Endothelial cell of umbilical vein (primary cell): ENCODE measurements at regions of chr13 and their contacts with region 1.

Region 1: GRCh38 chr13:106083620-106084350 is 451.7 kb downstream of the EFNB2 start:
- DNase-seq: peak; percentile 86
- H3K4me3 ChIP-seq: no peak overlapping the region
- H3K27ac ChIP-seq: no peak overlapping the region
- H3K4me1 ChIP-seq: no peaks in the 10 kb centered on the region
- H3K27me3 ChIP-seq: no peaks in the 10 kb centered on the region
- CTCF ChIP-seq: peak; percentile 71 to 77
- POLR2A ChIP-seq: no peak

Region 2: DNA sequence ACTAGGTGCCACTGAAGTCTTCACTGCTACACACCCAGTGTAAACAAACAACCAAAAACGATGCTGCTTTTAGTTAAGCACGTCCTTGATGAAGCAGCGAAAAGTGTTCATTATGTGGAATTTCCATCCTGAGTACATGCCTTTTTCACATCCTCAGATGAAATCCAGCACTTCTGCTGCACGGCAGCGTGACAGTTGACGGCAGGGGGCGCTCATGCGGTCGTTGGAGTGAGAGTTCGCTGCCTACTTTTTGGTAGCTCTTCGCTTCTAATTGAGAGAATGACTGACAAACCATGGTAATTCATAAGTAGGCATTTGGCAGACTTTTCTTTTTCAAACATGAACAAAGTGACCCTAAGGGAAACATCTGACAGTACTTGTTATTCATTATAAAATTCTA is 673.2 kb before region 1 on chr13:
- CTCF ChIA-PET with region 1: interaction called, 3 read pairs
- POLR2A ChIA-PET with region 1: no interaction called
- dilution Hi-C with region 1: no loop called
- intact Hi-C with region 1: loop called (anchors 5 kb)
- DNase-seq: peak; percentile 52
- H3K4me3 ChIP-seq: peak overlapping the region in 1 of 3 experiments; percentile 55
- H3K27ac ChIP-seq: no peak overlapping the region
- H3K4me1 ChIP-seq: no peaks in the 10 kb centered on the region
- H3K27me3 ChIP-seq: no peaks in the 10 kb centered on the region
- CTCF ChIP-seq: peak; percentile 68 to 80
- POLR2A ChIP-seq: no peak

Region 3: GRCh38 chr13:106349080-106349931 is 265.5 kb after region 1 on chr13:
- CTCF ChIA-PET with region 1: interaction called, 12 read pairs
- POLR2A ChIA-PET with region 1: no interaction called
- dilution Hi-C with region 1: no loop called
- intact Hi-C with region 1: no loop called
- DNase-seq: peak; percentile 99
- H3K4me3 ChIP-seq: peak overlapping the region in 2 of 3 experiments; percentile 17 to 52
- H3K27ac ChIP-seq: peak overlapping the region; percentile 98
- H3K4me1 ChIP-seq: peaks cover 30% of the 10 kb centered on the region
- H3K27me3 ChIP-seq: no peaks in the 10 kb centered on the region
- CTCF ChIP-seq: no peak
- POLR2A ChIP-seq: peak; percentile 71

Region 4: GRCh38 chr13:106520205-106521054 is 436.6 kb after region 1 on chr13:
- CTCF ChIA-PET with region 1: no interaction called
- POLR2A ChIA-PET with region 1: no interaction called
- dilution Hi-C with region 1: no loop called
- intact Hi-C with region 1: loop called (anchors 1 kb)
- DNase-seq: peak; percentile 55
- H3K4me3 ChIP-seq: no peak overlapping the region
- H3K27ac ChIP-seq: no peak overlapping the region
- H3K4me1 ChIP-seq: peaks cover 19% of the 10 kb centered on the region
- H3K27me3 ChIP-seq: no peaks in the 10 kb centered on the region
- CTCF ChIP-seq: peak; percentile 12 to 25
- POLR2A ChIP-seq: no peak

Region 5: DNA sequence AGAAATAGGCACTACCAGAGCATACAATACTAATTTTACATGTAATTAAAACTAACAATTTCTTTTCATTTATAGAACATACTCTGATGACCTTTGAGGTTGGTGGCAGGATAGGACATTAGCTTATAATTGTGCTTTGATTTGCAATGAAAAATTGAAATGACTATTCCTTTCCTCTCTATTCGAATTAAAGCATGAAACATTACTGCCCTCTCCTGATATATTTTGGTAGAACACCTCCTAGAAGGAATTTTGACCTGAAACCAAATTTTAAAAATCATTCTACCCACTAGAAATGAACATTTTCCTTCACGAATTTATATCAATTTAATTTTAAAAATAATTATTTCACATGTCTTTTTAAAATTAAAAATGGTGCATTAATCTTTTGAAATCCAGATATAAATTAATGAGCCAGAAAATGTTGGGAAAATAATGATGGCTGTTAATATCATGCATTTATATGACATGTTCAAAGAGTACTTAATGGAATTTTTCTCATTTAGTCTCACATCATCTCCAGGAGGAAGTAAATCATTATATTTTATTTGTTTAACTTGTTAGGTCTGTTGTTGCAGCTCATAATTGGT is 1040.4 kb after region 1 on chr13:
- CTCF ChIA-PET with region 1: no interaction called
- POLR2A ChIA-PET with region 1: no interaction called
- dilution Hi-C with region 1: no loop called
- intact Hi-C with region 1: loop called (anchors 1 kb)
- DNase-seq: peak; percentile 54
- H3K4me3 ChIP-seq: no peak overlapping the region
- H3K27ac ChIP-seq: no peak overlapping the region
- H3K4me1 ChIP-seq: no peaks in the 10 kb centered on the region
- H3K27me3 ChIP-seq: no peaks in the 10 kb centered on the region
- CTCF ChIP-seq: peak; percentile 20 to 22
- POLR2A ChIP-seq: no peak